ENCODE measurements at regions of chr9 and their contacts with region 1.

Region 1: GRCh38 chr9:110152704-110153374 is 55.1 kb downstream of the C9orf152 start:
- DNase-seq: no peak
- H3K4me3 Mint-ChIP-seq: no peak overlapping the region
- H3K27ac Mint-ChIP-seq: no peak overlapping the region
- H3K4me1 Mint-ChIP-seq: peaks cover 57% of the 10 kb centered on the region
- H3K27me3 Mint-ChIP-seq: no peaks in the 10 kb centered on the region

Region 2: GRCh38 chr9:109440797-109441287 is 712.0 kb before region 1 on chr9:
- CTCF ChIA-PET with region 1: interaction called, 5 read pairs
- intact Hi-C with region 1: loop called (anchors 2 kb)
- DNase-seq: peak; percentile 79
- H3K4me3 Mint-ChIP-seq: no peak overlapping the region
- H3K27ac Mint-ChIP-seq: no peak overlapping the region
- H3K4me1 Mint-ChIP-seq: peaks cover 16% of the 10 kb centered on the region
- H3K27me3 Mint-ChIP-seq: peaks cover 6% of the 10 kb centered on the region

Region 3: DNA sequence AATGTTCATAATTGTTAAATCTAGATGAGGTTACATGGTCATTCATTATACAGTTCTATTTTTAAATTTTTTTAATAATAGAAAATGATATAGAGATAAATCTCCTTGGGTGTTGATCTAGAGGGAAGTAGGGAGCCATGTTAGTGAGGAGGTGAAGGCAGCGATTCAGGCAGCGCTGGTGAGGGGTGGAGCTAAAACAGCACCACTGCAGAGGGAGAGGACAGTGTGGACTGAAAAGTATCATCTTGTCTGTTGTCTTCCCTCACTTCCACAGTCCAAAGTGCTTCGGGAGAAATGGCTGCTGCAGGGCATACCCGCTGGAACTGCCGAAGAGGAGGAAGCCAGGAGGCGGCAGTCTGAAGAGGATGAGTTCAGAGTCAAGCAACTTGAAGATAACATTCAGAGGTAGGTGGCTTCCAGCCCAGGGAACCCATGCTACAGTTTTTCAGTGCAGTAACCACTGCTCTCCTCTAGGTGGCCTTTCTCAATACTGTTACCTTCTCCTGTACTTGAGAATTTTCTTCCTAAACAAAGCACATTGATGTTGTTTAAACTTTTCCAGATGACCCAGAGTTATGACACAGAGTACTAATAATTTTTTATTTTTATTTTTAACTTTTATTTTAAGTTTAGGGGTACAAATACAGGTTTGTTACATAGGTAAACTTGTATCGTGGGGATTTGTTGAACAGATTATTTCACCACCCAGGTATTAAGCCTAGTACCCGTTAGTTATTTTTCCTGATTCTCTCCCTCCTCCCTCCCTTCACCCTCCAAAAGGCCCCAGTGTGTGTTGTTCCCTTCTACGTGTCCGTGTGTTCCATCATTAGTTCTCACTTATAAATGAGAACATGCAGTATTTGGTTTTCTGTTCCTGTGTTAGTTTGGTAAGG is 272.3 kb before region 1 on chr9:
- CTCF ChIA-PET with region 1: interaction called, 21 read pairs
- intact Hi-C with region 1: no loop called
- DNase-seq: peak; percentile 62
- H3K4me3 Mint-ChIP-seq: peak overlapping the region; percentile 43
- H3K27ac Mint-ChIP-seq: no peak overlapping the region
- H3K4me1 Mint-ChIP-seq: peaks cover 18% of the 10 kb centered on the region
- H3K27me3 Mint-ChIP-seq: peaks cover 5% of the 10 kb centered on the region

Region 4: GRCh38 chr9:109903515-109904138 is 249.2 kb before region 1 on chr9:
- CTCF ChIA-PET with region 1: interaction called, 58 read pairs
- intact Hi-C with region 1: loop called (anchors 1 kb)
- DNase-seq: peak; percentile 83
- H3K4me3 Mint-ChIP-seq: no peak overlapping the region
- H3K27ac Mint-ChIP-seq: no peak overlapping the region
- H3K4me1 Mint-ChIP-seq: peaks cover 11% of the 10 kb centered on the region
- H3K27me3 Mint-ChIP-seq: no peaks in the 10 kb centered on the region

Region 5: DNA sequence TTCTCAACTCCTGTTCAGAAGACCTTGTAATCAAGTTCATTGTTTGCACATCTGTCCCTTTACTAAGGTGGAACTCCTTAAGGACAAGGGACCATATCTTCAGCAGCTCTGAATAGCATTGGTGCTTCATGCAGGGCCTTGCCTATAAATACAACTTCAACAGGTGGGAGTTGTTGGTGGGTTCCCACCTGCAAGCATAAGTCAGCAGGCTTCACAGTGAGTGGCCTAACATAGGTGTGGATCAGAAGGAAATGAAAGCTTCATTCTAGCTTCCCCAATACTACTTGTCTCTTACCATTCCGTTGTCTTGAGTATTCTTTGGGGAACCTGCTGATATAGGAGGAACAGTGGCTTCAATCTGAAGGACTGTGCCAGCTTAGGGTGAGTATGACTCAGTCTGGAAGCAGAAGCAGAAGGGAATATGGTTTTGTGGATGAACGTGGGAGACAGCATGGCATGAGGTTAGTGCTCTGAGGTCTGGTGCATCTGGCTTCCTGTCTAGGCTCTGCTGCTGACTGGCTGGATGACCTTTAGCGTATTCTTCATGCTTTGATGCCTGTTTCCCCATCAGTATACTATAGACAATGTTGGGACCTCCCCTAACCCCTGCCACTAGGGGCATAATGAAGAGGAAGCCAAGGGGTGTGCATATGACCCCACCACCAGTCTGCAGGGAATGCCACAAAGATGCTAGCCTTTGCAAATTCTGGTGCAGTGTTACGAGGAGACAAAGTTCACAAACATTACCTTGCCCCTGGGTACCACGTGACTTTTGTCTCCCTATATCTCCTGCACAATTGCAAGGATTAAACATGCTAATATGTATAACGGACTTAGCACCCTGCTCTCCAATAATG is 180.6 kb before region 1 on chr9:
- CTCF ChIA-PET with region 1: interaction called, 3 read pairs
- intact Hi-C with region 1: loop called (anchors 1 kb)
- DNase-seq: peak; percentile 56
- H3K4me3 Mint-ChIP-seq: no peak overlapping the region
- H3K27ac Mint-ChIP-seq: peak overlapping the region; percentile 4
- H3K4me1 Mint-ChIP-seq: peaks cover 86% of the 10 kb centered on the region
- H3K27me3 Mint-ChIP-seq: no peaks in the 10 kb centered on the region

Region 6: GRCh38 chr9:110256380-110257096 is 103.7 kb after region 1 on chr9 and contains the start of gene TXN:
- CTCF ChIA-PET with region 1: no interaction called
- intact Hi-C with region 1: loop called (anchors 1 kb)
- DNase-seq: peak; percentile 94
- H3K4me3 Mint-ChIP-seq: peak within 1 kb of the TSS; percentile 91
- H3K27ac Mint-ChIP-seq: peak within 1 kb of the TSS; percentile 96
- H3K4me1 Mint-ChIP-seq: peaks cover 56% of the 10 kb centered on the region
- H3K27me3 Mint-ChIP-seq: no peaks in the 10 kb centered on the region
- total RNA-seq, gene TXN: 460 to 475 TPM

Measured in activated naive CD4-positive, alpha-beta T cell treated with anti-CD3 and anti-CD28 coated beads for 36 hours (primary cell).